Lower leg skin (tissue), 4 donors: ENCODE measurements at regions of chr7 and their contacts with region 1.

Region 1: DNA sequence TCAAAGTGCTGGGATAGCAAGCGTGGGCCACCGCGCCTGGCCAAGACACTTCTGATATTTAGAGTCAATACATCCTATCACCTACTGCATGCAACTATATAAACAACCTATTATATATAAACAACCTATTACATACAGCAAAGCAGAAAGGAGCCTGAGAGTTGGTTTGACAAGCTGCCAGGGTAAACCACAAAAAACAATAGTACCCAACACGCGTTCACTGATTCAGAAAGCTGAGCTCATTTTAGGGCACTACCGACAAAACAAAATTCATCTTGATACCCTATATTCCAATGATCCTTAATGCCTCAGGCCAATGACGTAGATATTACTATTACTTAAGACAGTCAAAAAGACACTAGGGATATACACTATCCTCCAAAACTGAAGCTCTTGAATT is 16.2 kb downstream of the MALSU1 start:
- DNase-seq: no peak
- H3K4me3 ChIP-seq: no peak overlapping the region
- CTCF ChIP-seq: no peak
- POLR2A ChIP-seq: no peak

Region 2: GRCh38 chr7:23346316-23346715 is 30.9 kb after region 1 on chr7:
- intact Hi-C with region 1: no loop called
- DNase-seq: no peak
- H3K4me3 ChIP-seq: no peak overlapping the region
- CTCF ChIP-seq: no peak
- POLR2A ChIP-seq: no peak

Region 3: DNA sequence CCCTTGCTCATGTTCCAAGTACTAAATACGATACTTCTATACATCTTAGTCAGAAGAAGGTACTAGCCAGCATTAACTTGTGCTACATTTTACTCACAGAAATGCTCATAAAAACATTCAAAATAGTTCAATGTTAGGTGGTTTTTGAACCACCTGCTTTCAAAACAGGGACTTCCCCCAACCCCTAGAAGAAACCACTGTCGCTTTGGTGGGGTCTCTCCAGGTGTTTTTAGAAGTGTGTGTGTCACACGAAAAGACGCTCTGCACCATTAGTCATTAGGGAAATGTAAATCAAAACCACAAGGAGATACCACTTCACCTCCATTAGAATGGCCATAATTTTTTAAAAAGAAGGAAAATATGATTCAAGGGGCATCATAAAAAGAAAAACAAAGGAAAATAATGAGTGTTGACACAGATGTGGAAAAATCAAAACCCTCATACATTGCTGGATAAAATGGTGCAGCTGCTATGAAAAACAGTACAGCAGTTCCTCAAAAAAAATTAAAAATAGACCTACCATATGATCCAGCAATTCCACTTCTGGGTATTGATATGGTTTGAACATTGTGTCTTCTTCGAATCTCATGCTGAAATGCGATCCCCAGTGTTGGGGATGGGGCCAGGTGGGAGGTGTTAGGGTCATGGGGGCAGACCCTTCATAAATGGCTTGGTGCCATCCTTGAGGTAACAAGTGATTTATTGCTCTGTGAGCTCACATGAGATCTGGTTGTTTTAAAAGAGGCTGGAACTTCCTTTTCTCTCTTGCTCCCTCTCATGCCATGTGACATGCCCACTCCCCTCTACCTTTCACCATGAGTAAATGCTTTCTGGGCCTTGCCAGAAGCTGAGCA is 58.0 kb after region 1 on chr7:
- intact Hi-C with region 1: no loop called
- DNase-seq: no peak
- H3K4me3 ChIP-seq: no peak overlapping the region
- CTCF ChIP-seq: no peak
- POLR2A ChIP-seq: no peak

Region 4: DNA sequence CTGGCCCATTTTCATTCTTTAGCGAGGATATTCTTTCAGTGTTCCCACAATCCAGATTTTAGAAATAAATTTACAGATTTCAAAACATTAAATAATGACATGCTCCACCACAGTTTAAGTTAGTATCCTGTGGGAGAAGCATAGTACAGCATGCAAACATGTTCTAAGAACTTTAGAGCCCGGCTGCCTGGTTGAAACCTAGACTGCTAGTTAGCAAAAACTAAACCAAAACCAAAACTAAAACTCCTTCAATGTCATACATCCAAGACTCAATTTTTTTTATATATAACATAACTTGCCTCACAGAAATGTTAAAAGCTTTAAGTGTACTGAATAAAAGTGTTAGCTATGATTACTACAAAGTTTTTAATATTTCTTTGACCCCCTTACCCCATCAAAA is 199.4 kb after region 1 on chr7:
- intact Hi-C with region 1: no loop called
- DNase-seq: no peak
- H3K4me3 ChIP-seq: no peak overlapping the region
- CTCF ChIP-seq: no peak
- POLR2A ChIP-seq: no peak

Region 5: DNA sequence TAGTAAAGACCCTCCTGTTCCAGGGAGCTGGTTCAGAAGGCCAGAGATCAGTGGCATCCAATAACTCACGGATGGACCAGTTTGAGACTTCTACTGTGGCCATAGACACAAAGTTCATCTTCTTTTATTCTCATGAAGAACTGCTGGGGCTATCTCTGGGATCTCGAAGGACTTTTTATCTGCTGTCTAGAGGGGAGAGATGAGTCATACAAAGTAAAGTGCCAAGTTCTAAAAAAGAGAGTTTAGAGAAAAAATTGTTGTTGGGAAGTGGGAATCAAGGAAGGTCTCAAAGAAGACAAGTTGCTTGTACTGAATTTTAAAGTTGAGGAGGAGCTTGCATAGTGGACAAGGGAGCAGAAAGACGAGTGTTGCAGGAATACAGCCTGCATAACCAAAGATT is 356.7 kb after region 1 on chr7:
- intact Hi-C with region 1: loop called (anchors 5 kb)
- DNase-seq: no peak
- H3K4me3 ChIP-seq: no peak overlapping the region
- CTCF ChIP-seq: no peak
- POLR2A ChIP-seq: no peak